GM10248 (cell line): ENCODE measurements at regions of chr15 and their contacts with region 1.

Region 1: GRCh38 chr15:93087825-93088199 is 1.2 kb downstream of the RGMA start:
- DNase-seq: peak; percentile 79
- CTCF ChIP-seq: peak; percentile 83

Region 2: GRCh38 chr15:92655178-92655995 is 432.4 kb before region 1 on chr15 and contains the start of gene FAM174B:
- CTCF ChIA-PET with region 1: no interaction called
- POLR2A ChIA-PET with region 1: no interaction called
- DNase-seq: peak; percentile 63
- CTCF ChIP-seq: no peak

Region 3: DNA sequence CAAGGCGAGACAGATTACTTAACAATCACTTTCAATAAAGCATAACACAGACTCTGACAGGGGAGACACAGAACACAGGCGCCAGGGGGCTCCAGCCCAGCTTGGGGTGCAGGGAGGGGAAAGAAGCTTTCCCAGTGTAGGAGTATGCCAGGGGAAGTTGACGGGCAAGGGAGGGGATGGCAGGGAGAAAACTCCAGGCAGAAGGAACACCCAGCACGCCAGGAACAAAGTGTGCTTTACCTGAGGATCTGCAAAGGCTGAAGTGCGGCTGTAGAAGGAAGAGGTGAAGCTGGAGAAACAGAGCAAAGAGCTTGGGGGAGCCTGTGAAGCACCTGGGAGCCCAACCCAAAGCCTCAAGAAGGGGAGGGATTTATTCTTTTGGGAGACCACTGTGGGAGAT is 10.9 kb before region 1 on chr15:
- CTCF ChIA-PET with region 1: interaction called, 15 read pairs
- POLR2A ChIA-PET with region 1: no interaction called
- DNase-seq: no peak
- CTCF ChIP-seq: no peak

Region 4: DNA sequence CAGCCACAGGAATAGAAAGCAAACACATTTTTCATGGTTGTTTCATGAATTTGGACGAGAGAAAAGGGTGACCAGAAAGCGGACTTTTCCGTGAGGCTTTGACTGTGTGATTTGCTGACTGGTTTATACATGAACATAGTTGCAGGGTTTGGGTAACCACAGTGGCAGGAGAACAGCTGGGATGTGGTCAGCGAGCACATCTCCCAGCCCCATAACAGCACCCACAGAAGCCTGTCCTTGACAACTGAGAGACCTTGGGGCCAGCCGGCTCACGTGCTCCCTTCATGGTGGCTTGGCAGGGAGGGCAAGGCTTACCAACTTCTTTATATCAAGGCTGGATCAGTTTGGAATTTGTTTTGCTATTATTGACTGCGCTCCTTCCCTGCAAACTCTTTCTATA is 14.4 kb after region 1 on chr15:
- CTCF ChIA-PET with region 1: interaction called, 13 read pairs
- POLR2A ChIA-PET with region 1: no interaction called
- DNase-seq: no peak
- CTCF ChIP-seq: no peak